Sigmoid colon (tissue), 7 donors: ENCODE measurements at regions of chr3 and their contacts with region 1.

Region 1: DNA sequence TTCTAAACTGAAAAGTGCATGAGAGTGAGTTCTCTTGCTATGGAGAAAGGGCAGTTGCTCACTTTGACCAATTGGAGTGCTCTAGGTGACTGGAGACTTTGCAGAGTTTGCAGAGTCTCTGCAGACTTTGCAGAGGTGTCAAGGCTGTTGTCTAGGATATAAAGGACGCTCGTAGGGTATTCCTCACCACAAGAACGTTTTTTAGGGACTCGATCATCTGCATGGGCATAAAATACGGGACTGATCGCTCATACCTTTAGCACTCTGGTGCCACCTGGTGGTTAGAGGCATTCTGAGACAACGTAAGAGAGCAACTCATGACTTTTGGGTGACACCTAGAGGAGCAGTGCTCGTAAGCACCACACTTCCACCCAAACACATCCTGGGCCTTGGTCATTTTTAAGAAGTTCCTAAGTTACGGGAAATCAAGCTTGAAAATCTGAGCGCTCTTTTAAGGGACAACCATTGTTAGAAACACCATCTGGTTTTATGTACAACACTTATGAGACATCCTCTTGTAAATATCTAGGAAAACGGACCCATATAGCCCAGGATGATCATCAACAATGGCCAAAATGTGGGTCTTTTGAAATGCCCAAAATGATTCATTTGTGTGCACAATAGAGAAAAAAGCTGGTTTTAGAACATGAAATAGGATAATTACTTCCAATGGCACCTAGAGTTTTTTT is 51.6 kb upstream of the XCR1 start:
- DNase-seq: peak; percentile 95
- H3K4me3 ChIP-seq: peak overlapping the region in 1 of 4 donors; percentile 26
- H3K27ac ChIP-seq: no peak overlapping the region
- H3K4me1 ChIP-seq: peaks cover 0 to 5% (median 0%) of the 10 kb centered on the region in 4 donors
- H3K27me3 ChIP-seq: no peaks in the 10 kb centered on the region
- CTCF ChIP-seq: peak; percentile 94 to 99 (median 99)
- EP300 ChIP-seq: no peak
- POLR2A ChIP-seq: no peak

Region 2: DNA sequence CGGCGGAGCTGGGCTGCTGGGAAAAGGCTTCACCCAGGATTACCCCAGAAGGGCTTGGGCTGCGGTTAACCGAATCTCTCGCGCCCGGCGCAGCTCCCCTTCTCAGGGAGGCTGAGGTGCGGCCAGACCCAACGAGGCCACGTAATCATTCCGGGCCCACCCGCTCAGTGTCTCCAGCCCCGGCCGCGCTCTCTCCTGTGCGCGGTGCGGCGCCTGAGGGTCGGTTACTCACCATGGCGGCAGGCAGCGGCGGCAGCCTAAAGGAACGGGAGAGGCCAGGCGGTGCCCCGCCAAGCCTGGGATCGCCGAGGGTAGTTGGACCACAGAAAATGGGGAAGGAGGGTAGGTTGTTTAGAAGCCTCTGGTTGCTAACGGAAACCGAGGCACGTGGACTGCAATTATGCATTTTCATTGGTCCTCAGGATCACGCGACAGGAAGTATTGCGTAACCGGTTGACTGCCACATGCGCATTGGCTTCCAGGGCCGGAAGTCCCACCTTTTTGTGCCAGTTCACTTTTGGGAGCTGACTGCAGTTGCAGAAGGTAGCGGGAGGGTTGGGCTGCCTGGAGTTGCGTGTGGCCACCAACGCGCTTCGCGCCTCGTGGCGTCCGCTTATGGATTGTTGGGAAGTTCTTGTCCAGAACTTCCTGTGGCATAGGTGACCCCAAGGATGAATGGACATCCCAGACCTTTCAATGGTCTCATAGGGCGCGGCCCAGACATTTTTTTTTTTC is 236.9 kb before region 1 on chr3 and contains the start of gene LZTFL1:
- intact Hi-C with region 1: loop called (anchors 5 kb)
- DNase-seq: peak; percentile 97
- H3K4me3 ChIP-seq: peak within 1 kb of the TSS; percentile 68 to 86 (median 70)
- H3K27ac ChIP-seq: peak within 1 kb of the TSS; percentile 48 to 77 (median 64)
- H3K4me1 ChIP-seq: peaks cover 0 to 11% (median 11%) of the 10 kb centered on the region in 4 donors
- H3K27me3 ChIP-seq: no peaks in the 10 kb centered on the region
- CTCF ChIP-seq: no peak
- EP300 ChIP-seq: no peak
- POLR2A ChIP-seq: no peak
- total RNA-seq, gene LZTFL1: 16.6 to 31.0 (median 17.8) TPM

Region 3: GRCh38 chr3:45995236-45996192 is 83.3 kb before region 1 on chr3 and contains the start of gene FYCO1:
- intact Hi-C with region 1: loop called (anchors 5 kb)
- DNase-seq: peak; percentile 97
- H3K4me3 ChIP-seq: peak within 1 kb of the TSS; percentile 81 to 99 (median 92)
- H3K27ac ChIP-seq: peak within 1 kb of the TSS; percentile 91 to 98 (median 95)
- H3K4me1 ChIP-seq: peaks cover 0 to 47% (median 42%) of the 10 kb centered on the region in 4 donors
- H3K27me3 ChIP-seq: no peaks in the 10 kb centered on the region
- CTCF ChIP-seq: no peak
- EP300 ChIP-seq: no peak
- POLR2A ChIP-seq: peak; percentile 44 to 82
- total RNA-seq, gene FYCO1: 72.1 to 115 (median 79.2) TPM